Head of caudate nucleus (tissue), 42 donors: ENCODE measurements at regions of chr17 and their contacts with region 1.

Region 1: DNA sequence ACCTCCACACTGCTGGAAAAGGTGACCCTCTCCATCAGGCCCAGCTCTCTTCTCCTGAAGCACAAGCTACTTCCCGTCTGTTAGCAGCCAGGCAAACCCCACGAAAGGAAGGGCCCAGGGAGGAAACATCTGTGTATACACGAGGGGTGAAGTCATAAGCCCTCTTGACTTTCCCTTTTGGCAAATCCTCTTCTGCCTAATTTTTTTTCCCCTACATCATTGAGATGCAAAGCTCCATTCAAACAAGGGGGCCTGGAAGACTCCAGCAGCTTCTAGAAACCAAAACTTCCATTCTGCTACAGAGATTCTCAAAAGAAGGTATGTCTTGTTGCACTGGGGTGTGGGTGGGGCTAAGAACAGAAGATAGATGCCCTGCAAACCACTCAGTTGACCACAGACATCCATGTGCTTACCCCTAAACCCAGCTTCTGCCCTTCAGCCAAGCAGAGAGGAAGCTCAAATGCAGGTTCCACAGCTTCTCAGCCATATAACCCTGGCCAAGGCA is 145.6 kb upstream of the RCVRN start:
- DNase-seq: no peak

Region 2: DNA sequence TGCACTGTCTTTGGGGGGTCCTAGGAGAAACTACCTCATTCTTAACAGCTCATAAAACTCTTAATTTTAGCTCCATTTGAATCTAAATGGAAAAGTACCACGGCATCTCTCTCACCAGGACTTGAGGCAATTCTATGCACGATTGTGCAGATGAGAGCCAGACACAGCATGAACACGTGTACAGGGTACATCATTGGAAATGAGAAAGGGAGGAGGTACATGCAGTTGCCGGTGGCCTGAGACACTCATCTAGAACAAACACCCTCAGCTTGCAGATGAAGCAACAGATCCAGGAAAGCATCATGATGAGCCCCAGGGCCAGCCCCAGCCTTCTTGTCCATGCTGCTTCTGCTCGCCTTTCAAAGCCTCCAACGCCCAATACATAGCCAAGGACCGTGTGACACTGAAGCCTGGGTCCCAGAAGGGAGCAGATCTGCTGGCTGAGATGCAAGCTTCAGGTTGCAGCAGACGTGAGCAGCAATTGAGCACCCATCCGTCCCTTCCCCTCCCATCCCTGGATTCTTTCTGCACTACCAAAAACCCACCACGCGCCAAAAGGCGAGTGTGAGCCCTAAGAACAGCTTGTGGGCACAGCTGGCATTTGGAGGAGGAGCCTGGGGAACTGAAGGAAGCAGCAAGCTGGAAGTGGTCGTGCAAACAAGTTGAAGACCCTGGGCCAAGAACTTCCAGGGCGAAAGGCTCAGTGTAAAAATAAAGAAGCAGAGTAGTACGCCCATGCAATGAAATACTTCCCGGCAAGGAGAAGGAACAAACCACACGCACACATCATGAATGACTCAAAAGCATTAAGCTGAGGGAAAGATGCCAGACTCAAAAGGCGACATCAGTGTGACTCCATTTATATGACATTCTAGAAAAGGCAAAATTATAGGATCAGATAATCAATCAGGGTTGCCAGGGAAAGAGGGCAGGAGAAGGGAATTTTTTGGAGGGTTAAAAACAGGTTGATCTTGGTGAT is 138.2 kb before region 1 on chr17:
- intact Hi-C with region 1: no loop called
- DNase-seq: peak in 10 of 42 donors; percentile 35 to 66 (median 50)

Region 3: DNA sequence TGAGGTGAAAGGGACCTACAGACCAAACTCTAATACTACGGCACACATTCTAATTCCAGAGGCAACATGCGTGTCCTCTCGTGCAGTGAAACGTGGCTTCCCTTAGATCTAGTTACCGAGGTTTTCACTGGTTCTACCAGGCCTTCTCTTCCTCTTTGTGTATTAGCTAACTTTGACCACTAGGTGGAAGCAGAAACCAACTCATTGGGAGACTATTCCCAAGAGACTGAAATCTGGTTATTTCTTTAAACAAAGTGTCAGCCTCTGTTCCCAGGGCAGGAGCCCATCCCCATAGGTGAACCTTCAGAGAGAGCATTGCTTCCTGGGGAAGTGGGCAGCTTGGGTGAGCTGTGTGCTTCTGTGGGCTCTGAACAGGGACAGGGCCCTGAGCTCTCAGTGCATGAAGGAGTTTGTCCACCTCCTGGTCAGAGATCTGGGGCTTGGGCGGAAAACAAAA is 125.9 kb before region 1 on chr17:
- intact Hi-C with region 1: loop called (anchors 10 kb)
- DNase-seq: peak in 11 of 42 donors; percentile 29 to 79 (median 52)

Region 4: GRCh38 chr17:10115071-10115539 is 64.5 kb after region 1 on chr17:
- intact Hi-C with region 1: loop called (anchors 5 kb)
- DNase-seq: peak; percentile 56 to 96 (median 83)